ENCODE measurements at regions of chr13 and their contacts with region 1.

Region 1: DNA sequence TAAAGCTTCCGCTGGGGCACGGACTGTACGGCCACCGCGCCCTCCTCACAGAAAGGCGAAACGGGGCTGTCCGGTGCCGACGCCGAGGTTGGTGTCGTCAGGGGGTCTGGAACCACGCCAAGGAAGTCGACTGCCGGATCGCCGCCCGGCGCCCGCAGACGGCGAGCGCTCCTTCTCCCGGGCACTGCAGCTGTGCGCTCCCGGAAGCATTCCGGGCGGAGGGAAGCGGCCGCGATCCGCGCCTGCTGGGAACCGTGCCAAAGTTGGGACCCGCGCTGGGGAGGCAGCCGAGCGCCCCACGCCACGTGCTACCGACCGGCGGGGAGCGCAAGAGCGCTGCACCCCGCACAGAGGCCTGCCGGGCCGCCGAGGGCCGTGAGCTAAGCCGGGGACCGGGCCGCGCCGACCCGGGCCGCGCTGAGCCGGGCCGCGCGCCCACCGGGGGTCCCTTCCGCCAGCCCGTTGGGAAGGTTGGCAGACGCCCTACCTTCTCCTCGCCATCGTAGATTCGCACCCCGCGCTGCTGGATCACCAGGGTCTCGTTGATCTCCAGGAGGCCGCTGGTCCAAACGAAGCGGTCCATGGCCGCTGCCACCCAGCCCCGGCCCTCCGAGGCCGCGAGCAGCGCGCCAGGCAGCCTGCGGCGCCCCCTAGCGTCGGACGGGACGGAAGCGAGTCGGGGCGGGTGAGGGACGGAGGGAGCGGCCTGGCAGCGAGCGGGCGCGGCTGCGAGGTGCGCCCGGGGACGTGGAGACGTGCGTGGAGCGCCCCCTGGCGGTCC is at the start of gene VPS36:
- DNase-seq: peak; percentile 89 to 94 (median 94)
- H3K4me3 ChIP-seq: peak within 1 kb of the TSS; percentile 53 to 95
- H3K4me3 Mint-ChIP-seq: peak within 1 kb of the TSS; percentile 90 to 98 (median 94)
- H3K27ac ChIP-seq: peak within 1 kb of the TSS; percentile 82
- H3K27ac Mint-ChIP-seq: peak within 1 kb of the TSS; percentile 84 to 95 (median 92)
- H3K4me1 ChIP-seq: peaks cover 38% of the 10 kb centered on the region
- H3K4me1 Mint-ChIP-seq: peaks cover 22 to 55% (median 36%) of the 10 kb centered on the region in 4 donors
- H3K27me3 ChIP-seq: no peaks in the 10 kb centered on the region
- H3K27me3 Mint-ChIP-seq: no peaks in the 10 kb centered on the region
- total RNA-seq, gene VPS36: 59.9 to 64.5 TPM

Region 2: GRCh38 chr13:51583875-51584730 is 866.1 kb before region 1 on chr13 and contains the start of gene WDFY2:
- CTCF ChIA-PET with region 1: no interaction called
- POLR2A ChIA-PET with region 1: no interaction called
- intact Hi-C with region 1: loop called (anchors 2 kb)
- DNase-seq: peak; percentile 99 to 100 (median 100)
- H3K4me3 ChIP-seq: peak within 1 kb of the TSS; percentile 65 to 92
- H3K4me3 Mint-ChIP-seq: peak within 1 kb of the TSS; percentile 97 to 100 (median 99)
- H3K27ac ChIP-seq: peak within 1 kb of the TSS; percentile 88
- H3K27ac Mint-ChIP-seq: peak within 1 kb of the TSS; percentile 96 to 100 (median 100)
- H3K4me1 ChIP-seq: peaks cover 26% of the 10 kb centered on the region
- H3K4me1 Mint-ChIP-seq: peaks cover 27 to 44% (median 35%) of the 10 kb centered on the region in 4 donors
- H3K27me3 ChIP-seq: no peaks in the 10 kb centered on the region
- H3K27me3 Mint-ChIP-seq: no peaks in the 10 kb centered on the region
- total RNA-seq, gene WDFY2: 20.0 to 21.8 TPM

Region 3: DNA sequence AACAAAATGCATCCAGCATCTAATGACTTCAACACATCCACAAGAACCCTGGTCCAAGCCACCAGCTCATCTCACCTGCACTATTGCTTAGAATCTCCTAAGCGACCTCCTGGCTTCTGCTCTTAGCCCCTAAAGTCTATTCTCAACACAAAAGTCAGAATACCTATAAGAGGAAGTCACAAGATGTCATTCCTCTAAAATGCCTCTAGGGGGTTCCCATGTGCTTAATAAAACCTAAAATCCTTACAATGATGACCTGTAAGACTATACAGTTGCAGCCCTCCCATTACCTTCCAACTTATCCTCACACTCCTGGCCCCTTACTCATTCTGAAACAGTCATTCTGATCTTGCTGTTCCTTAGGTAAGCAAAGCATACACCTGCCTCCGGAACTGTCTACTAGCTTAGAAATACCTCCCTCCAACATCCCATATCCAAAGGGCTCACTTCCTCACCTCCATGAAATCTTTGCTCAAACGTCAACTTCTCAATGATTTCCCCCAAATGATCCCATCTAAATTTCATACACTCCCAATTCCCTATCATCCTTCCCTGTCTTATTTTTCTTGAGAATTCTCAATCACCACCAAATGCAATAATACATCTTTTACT is 449.0 kb before region 1 on chr13:
- CTCF ChIA-PET with region 1: interaction called, 4 read pairs
- POLR2A ChIA-PET with region 1: no interaction called
- intact Hi-C with region 1: loop called (anchors 1 kb)
- DNase-seq: peak in 4 of 5 donors; percentile 41 to 48 (median 43)
- H3K4me3 ChIP-seq: no peak overlapping the region
- H3K4me3 Mint-ChIP-seq: no peak overlapping the region
- H3K27ac ChIP-seq: no peak overlapping the region
- H3K27ac Mint-ChIP-seq: peak overlapping the region in 1 of 7 donors; percentile 56
- H3K4me1 ChIP-seq: no peaks in the 10 kb centered on the region
- H3K4me1 Mint-ChIP-seq: peaks cover 0 to 2% (median under 1%) of the 10 kb centered on the region in 4 donors
- H3K27me3 ChIP-seq: peaks cover 5% of the 10 kb centered on the region
- H3K27me3 Mint-ChIP-seq: peaks cover 4 to 7% of the 10 kb centered on the region in 2 donors

Region 4: GRCh38 chr13:52194184-52194868 is 255.9 kb before region 1 on chr13:
- CTCF ChIA-PET with region 1: interaction called, 6 read pairs
- POLR2A ChIA-PET with region 1: interaction called, 16 read pairs
- intact Hi-C with region 1: loop called (anchors 1 kb)
- DNase-seq: peak; percentile 84 to 88 (median 85)
- H3K4me3 ChIP-seq: peak overlapping the region; percentile 82 to 94
- H3K4me3 Mint-ChIP-seq: peak overlapping the region; percentile 96 to 99 (median 98)
- H3K27ac ChIP-seq: peak overlapping the region; percentile 68
- H3K27ac Mint-ChIP-seq: peak overlapping the region; percentile 94 to 99 (median 97)
- H3K4me1 ChIP-seq: peaks cover 27% of the 10 kb centered on the region
- H3K4me1 Mint-ChIP-seq: peaks cover 23 to 41% (median 35%) of the 10 kb centered on the region in 4 donors
- H3K27me3 ChIP-seq: no peaks in the 10 kb centered on the region
- H3K27me3 Mint-ChIP-seq: no peaks in the 10 kb centered on the region

Region 5: GRCh38 chr13:52428295-52428694 is 21.9 kb before region 1 on chr13:
- CTCF ChIA-PET with region 1: interaction called, 16 read pairs
- POLR2A ChIA-PET with region 1: interaction called, 6 read pairs
- intact Hi-C with region 1: no loop called
- DNase-seq: no peak
- H3K4me3 ChIP-seq: no peak overlapping the region
- H3K4me3 Mint-ChIP-seq: no peak overlapping the region
- H3K27ac ChIP-seq: no peak overlapping the region
- H3K27ac Mint-ChIP-seq: no peak overlapping the region
- H3K4me1 ChIP-seq: no peaks in the 10 kb centered on the region
- H3K4me1 Mint-ChIP-seq: peaks cover 0 to 8% (median 1%) of the 10 kb centered on the region in 4 donors
- H3K27me3 ChIP-seq: no peaks in the 10 kb centered on the region
- H3K27me3 Mint-ChIP-seq: no peaks in the 10 kb centered on the region

Region 6: GRCh38 chr13:52665325-52665724 is 215.1 kb after region 1 on chr13:
- CTCF ChIA-PET with region 1: interaction called, 3 read pairs
- POLR2A ChIA-PET with region 1: no interaction called
- intact Hi-C with region 1: loop called (anchors 5 kb)
- DNase-seq: peak in 4 of 5 donors; percentile 14 to 39 (median 19)
- H3K4me3 ChIP-seq: no peak overlapping the region
- H3K4me3 Mint-ChIP-seq: no peak overlapping the region
- H3K27ac ChIP-seq: no peak overlapping the region
- H3K27ac Mint-ChIP-seq: peak overlapping the region in 3 of 7 donors; percentile 27 to 72 (median 42)
- H3K4me1 ChIP-seq: no peaks in the 10 kb centered on the region
- H3K4me1 Mint-ChIP-seq: peaks cover 4 to 6% (median 4%) of the 10 kb centered on the region in 4 donors
- H3K27me3 ChIP-seq: no peaks in the 10 kb centered on the region
- H3K27me3 Mint-ChIP-seq: no peaks in the 10 kb centered on the region